Vagina (tissue), 2 donors: ENCODE measurements at regions of chr1 and their contacts with region 1.

Region 1: DNA sequence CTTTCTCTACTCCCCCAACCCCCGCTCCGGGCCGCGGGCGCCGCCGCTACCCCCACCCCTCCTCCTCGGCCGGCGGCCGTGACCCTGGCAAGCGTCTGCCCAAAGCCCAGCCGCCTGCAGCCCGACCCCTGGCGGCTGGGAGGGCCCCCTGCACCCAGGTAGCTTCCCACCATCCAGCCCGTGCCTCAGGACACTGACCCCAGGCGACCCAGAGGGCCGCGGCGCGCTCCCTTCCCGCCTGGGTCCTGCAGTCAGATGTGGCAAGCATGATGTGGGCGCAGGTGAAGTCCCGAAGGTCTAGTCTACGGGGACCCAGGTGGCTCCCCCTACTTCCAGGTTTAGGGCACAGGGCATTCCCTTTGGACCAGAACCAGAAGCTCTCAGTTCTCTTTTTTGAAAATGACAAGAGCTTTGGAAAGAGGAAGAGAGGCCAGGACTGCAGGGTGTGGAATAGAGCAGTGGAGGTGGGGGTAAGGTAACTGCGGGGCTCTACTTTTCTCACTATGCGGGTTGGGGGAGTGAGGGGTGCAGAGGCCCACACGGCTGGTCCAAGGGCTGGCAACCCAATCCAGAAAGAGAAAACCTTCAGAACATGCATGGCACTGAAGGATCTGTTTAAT is at the start of gene DENND4B:
- DNase-seq: no peak
- H3K4me3 ChIP-seq: peak within 1 kb of the TSS; percentile 73 to 89
- H3K27ac ChIP-seq: peak within 1 kb of the TSS; percentile 99
- H3K4me1 ChIP-seq: peaks cover 27% of the 10 kb centered on the region
- H3K27me3 ChIP-seq: no peaks in the 10 kb centered on the region
- CTCF ChIP-seq: peak; percentile 84 to 90 (median 86)
- POLR2A ChIP-seq: no peak
- total RNA-seq, gene DENND4B: 42.7 TPM

Region 2: DNA sequence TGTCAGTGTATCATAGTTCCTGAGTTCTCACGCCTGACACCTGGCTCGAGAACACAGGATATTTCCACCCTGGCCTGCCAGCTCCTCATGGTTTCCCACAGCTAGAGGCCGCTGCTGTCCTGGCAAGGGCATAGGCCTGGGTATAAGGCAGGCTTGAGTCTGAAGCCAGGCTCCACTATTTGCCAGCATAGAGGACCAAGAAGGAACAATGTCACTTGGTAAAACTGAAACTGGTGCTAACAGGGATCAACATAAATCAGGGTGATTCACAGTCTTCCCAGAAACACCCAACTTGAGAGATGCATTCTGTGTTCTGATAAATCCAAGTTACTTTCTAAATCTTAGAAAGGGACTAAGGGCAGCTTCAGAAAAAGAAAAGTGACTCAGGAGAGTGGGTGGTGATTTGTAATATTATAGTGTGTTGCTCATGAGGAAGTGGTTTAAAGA is 374.1 kb before region 1 on chr1:
- intact Hi-C with region 1: no loop called
- DNase-seq: no peak
- H3K4me3 ChIP-seq: no peak overlapping the region
- H3K27ac ChIP-seq: peak overlapping the region; percentile 59
- H3K4me1 ChIP-seq: peaks cover 22% of the 10 kb centered on the region
- H3K27me3 ChIP-seq: no peaks in the 10 kb centered on the region
- CTCF ChIP-seq: peak; percentile 60 to 74 (median 61)
- POLR2A ChIP-seq: no peak

Region 3: DNA sequence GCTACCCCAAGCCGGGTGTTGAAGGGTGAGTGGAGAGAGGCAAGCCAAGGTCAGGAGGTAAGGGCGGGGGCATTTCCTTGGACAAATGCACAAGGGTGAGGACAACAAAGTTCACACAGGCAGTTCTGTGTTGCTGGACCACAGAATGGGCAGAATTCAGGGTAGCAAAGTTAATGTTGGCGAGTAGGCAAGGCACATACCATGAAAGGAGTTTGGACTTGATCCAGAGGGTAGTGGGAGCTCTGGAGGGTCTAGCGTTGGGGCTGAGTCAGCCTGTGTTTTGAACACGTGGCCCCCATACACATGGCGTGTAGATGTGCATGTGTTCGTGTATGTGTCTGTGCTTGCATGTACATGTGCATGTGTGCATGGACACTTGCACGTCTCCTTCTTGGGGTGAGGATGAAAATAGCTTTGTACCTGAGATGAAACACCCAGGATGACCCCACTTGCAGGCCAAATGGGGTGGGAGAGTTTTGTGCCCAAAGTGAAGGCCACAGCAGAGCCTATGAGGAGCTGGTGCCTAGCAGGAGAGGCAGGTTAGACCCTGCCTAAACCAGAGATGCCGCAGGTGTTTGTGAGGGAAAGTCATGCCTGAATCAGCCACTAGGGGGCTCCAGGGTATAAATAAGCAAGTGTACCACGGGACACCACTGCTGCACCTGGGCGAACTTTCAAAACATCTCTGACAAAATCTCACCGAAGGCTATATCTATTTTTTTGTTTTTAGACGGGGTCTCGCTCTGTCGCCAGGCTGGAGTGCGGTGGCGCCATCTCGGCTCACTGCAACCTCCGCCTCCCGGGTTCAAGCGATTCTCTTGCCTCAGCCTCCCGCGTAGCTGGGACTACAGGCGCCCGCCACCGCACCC is 149.7 kb before region 1 on chr1:
- intact Hi-C with region 1: loop called (anchors 10 kb)
- DNase-seq: no peak
- H3K4me3 ChIP-seq: no peak overlapping the region
- H3K27ac ChIP-seq: no peak overlapping the region
- H3K4me1 ChIP-seq: no peaks in the 10 kb centered on the region
- H3K27me3 ChIP-seq: no peaks in the 10 kb centered on the region
- CTCF ChIP-seq: peak; percentile 81 to 91 (median 82)
- POLR2A ChIP-seq: no peak

Region 4: GRCh38 chr1:153899509-153899908 is 47.2 kb before region 1 on chr1:
- intact Hi-C with region 1: no loop called
- DNase-seq: no peak
- H3K4me3 ChIP-seq: no peak overlapping the region
- H3K27ac ChIP-seq: no peak overlapping the region
- H3K4me1 ChIP-seq: peaks cover 11% of the 10 kb centered on the region
- H3K27me3 ChIP-seq: no peaks in the 10 kb centered on the region
- CTCF ChIP-seq: no peak
- POLR2A ChIP-seq: no peak

Region 5: DNA sequence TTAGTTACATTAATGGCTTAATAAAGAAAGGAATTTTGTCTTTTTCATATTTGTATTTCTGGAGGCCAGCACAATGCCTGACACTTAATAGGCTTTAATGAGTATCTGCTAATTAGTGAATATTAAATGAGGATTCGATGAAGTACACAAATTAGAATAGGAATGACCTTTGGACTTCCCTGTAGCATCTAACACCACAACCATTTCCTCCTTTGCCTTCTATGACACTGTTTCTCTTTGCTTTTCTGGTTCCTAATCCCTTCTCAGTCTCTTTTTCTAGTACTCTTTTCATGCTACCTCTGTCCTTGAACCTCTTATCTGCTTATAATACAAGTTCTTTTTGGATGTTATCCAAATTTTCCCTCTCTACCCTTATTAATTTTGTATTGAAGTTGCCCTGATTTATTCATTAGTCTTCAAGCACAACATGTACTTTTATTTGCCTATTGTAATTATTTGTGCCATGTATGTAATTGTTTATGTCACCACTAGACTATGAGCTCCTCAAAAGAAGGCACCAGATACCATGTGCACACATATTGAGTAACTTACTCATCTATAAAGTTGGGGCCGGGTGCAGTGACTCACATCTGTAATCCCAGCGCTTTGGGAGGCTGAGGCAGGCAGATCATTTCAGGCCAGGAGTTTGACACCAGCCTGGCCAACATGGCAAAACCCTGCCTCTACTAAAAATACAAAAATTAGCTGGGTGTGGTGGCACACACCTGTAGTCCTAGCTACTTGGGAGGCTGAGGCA is 67.6 kb after region 1 on chr1:
- intact Hi-C with region 1: no loop called
- DNase-seq: no peak
- H3K4me3 ChIP-seq: no peak overlapping the region
- H3K27ac ChIP-seq: no peak overlapping the region
- H3K4me1 ChIP-seq: no peaks in the 10 kb centered on the region
- H3K27me3 ChIP-seq: no peaks in the 10 kb centered on the region
- CTCF ChIP-seq: no peak
- POLR2A ChIP-seq: no peak